Right lobe of liver (tissue), 6 donors: ENCODE measurements at regions of chr13 and their contacts with region 1.

Region 1: DNA sequence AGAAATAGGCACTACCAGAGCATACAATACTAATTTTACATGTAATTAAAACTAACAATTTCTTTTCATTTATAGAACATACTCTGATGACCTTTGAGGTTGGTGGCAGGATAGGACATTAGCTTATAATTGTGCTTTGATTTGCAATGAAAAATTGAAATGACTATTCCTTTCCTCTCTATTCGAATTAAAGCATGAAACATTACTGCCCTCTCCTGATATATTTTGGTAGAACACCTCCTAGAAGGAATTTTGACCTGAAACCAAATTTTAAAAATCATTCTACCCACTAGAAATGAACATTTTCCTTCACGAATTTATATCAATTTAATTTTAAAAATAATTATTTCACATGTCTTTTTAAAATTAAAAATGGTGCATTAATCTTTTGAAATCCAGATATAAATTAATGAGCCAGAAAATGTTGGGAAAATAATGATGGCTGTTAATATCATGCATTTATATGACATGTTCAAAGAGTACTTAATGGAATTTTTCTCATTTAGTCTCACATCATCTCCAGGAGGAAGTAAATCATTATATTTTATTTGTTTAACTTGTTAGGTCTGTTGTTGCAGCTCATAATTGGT is 556.3 kb upstream of the ARGLU1 start:
- DNase-seq: no peak
- ATAC-seq: peak; percentile 61 to 71 (median 66)
- H3K4me3 ChIP-seq: no peak overlapping the region
- H3K27ac ChIP-seq: no peak overlapping the region
- H3K4me1 ChIP-seq: no peaks in the 10 kb centered on the region
- H3K27me3 ChIP-seq: no peaks in the 10 kb centered on the region
- CTCF ChIP-seq: peak; percentile 66 to 78 (median 71)
- POLR2A ChIP-seq: no peak

Region 2: GRCh38 chr13:106917673-106918556 is 206.3 kb before region 1 on chr13:
- intact Hi-C with region 1: loop called in 1 of 2 experiments (anchors 10 kb)
- DNase-seq: peak; percentile 75 to 84 (median 81)
- ATAC-seq: peak; percentile 91 to 96 (median 94)
- H3K4me3 ChIP-seq: peak overlapping the region; percentile 54 to 70 (median 56)
- H3K27ac ChIP-seq: peak overlapping the region; percentile 63 to 85 (median 79)
- H3K4me1 ChIP-seq: no peaks in the 10 kb centered on the region
- H3K27me3 ChIP-seq: no peaks in the 10 kb centered on the region
- CTCF ChIP-seq: peak; percentile 88 to 99 (median 98)
- POLR2A ChIP-seq: peak; percentile 37

Region 3: GRCh38 chr13:106981051-106981450 is 143.2 kb before region 1 on chr13:
- intact Hi-C with region 1: no loop called
- DNase-seq: no peak
- ATAC-seq: no peak
- H3K4me3 ChIP-seq: no peak overlapping the region
- H3K27ac ChIP-seq: no peak overlapping the region
- H3K4me1 ChIP-seq: peaks cover 0 to 6% (median 3%) of the 10 kb centered on the region in 4 donors
- H3K27me3 ChIP-seq: no peaks in the 10 kb centered on the region
- CTCF ChIP-seq: no peak
- POLR2A ChIP-seq: no peak